B cell (primary cell): ENCODE measurements at regions of chr11 and their contacts with region 1.

Region 1: GRCh38 chr11:34585735-34586487 is 35.0 kb upstream of the EHF start:
- DNase-seq: peak; percentile 74
- ATAC-seq: peak; percentile 94
- H3K4me3 ChIP-seq: no peak overlapping the region
- H3K4me3 Mint-ChIP-seq: peak overlapping the region; percentile 33
- H3K27ac ChIP-seq: peak overlapping the region; percentile 43
- H3K27ac Mint-ChIP-seq: peak overlapping the region; percentile 48
- H3K4me1 ChIP-seq: peaks cover 12 to 16% of the 10 kb centered on the region in 2 donors
- H3K4me1 Mint-ChIP-seq: peaks cover 23% of the 10 kb centered on the region
- H3K27me3 ChIP-seq: no peaks in the 10 kb centered on the region
- H3K27me3 Mint-ChIP-seq: no peaks in the 10 kb centered on the region
- CTCF ChIP-seq: peak; percentile 77

Region 2: GRCh38 chr11:34512840-34513681 is 72.8 kb before region 1 on chr11:
- CTCF ChIA-PET with region 1: interaction called, 18 read pairs
- POLR2A ChIA-PET with region 1: no interaction called
- intact Hi-C with region 1: no loop called
- DNase-seq: peak; percentile 60
- ATAC-seq: peak; percentile 82
- H3K4me3 ChIP-seq: no peak overlapping the region
- H3K4me3 Mint-ChIP-seq: no peak overlapping the region
- H3K27ac ChIP-seq: no peak overlapping the region
- H3K27ac Mint-ChIP-seq: no peak overlapping the region
- H3K4me1 ChIP-seq: no peaks in the 10 kb centered on the region
- H3K4me1 Mint-ChIP-seq: no peaks in the 10 kb centered on the region
- H3K27me3 ChIP-seq: peaks cover 0 to 4% (median 0%) of the 10 kb centered on the region in 4 experiments
- H3K27me3 Mint-ChIP-seq: peaks cover 6% of the 10 kb centered on the region
- CTCF ChIP-seq: peak; percentile 80

Region 3: DNA sequence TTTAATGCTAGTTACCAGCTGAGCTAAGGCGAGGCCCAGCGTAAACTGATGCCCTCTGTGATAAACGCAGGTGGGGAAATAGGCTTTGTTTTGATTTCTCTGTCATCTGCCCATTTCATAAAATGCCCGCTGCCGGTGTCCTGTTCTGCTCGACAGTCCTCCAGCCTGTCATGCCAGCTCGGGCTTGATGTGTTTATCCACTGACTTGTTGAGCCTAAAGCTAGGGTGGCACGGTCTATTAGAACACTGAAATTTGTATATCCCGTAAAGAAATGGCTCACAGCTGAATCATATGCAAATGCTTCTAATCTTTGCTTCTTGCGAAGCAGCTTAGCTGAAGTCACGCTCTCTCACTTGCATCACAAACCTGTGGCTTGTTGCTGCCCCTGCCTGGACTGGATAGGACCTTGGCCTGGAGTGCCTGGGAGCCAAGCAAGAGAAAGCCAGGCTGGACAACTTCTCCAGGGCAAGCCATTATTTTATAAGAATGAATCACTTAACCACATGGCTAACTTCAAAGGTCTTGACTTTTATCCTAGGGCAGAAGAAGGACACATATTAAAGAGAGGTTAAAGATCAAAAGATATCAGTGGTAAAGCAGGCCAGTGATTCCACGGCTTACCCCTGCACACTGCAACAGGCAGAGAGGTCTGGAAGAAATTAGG is 68.0 kb after region 1 on chr11:
- CTCF ChIA-PET with region 1: interaction called, 34 read pairs
- POLR2A ChIA-PET with region 1: no interaction called
- intact Hi-C with region 1: loop called (anchors 5 kb)
- DNase-seq: peak; percentile 22
- ATAC-seq: peak; percentile 60
- H3K4me3 ChIP-seq: no peak overlapping the region
- H3K4me3 Mint-ChIP-seq: peak overlapping the region; percentile 75
- H3K27ac ChIP-seq: no peak overlapping the region
- H3K27ac Mint-ChIP-seq: peak overlapping the region; percentile 83
- H3K4me1 ChIP-seq: peaks cover 39 to 48% of the 10 kb centered on the region in 2 donors
- H3K4me1 Mint-ChIP-seq: peaks cover 41% of the 10 kb centered on the region
- H3K27me3 ChIP-seq: no peaks in the 10 kb centered on the region
- H3K27me3 Mint-ChIP-seq: peaks cover 4% of the 10 kb centered on the region
- CTCF ChIP-seq: no peak

Region 4: GRCh38 chr11:34890812-34891211 is 304.9 kb after region 1 on chr11:
- CTCF ChIA-PET with region 1: interaction called, 45 read pairs
- POLR2A ChIA-PET with region 1: no interaction called
- intact Hi-C with region 1: loop called (anchors 1 kb)
- DNase-seq: peak; percentile 26
- ATAC-seq: no peak
- H3K4me3 ChIP-seq: no peak overlapping the region
- H3K4me3 Mint-ChIP-seq: no peak overlapping the region
- H3K27ac ChIP-seq: no peak overlapping the region
- H3K27ac Mint-ChIP-seq: no peak overlapping the region
- H3K4me1 ChIP-seq: no peaks in the 10 kb centered on the region
- H3K4me1 Mint-ChIP-seq: no peaks in the 10 kb centered on the region
- H3K27me3 ChIP-seq: no peaks in the 10 kb centered on the region
- H3K27me3 Mint-ChIP-seq: no peaks in the 10 kb centered on the region
- CTCF ChIP-seq: peak; percentile 54

Region 5: DNA sequence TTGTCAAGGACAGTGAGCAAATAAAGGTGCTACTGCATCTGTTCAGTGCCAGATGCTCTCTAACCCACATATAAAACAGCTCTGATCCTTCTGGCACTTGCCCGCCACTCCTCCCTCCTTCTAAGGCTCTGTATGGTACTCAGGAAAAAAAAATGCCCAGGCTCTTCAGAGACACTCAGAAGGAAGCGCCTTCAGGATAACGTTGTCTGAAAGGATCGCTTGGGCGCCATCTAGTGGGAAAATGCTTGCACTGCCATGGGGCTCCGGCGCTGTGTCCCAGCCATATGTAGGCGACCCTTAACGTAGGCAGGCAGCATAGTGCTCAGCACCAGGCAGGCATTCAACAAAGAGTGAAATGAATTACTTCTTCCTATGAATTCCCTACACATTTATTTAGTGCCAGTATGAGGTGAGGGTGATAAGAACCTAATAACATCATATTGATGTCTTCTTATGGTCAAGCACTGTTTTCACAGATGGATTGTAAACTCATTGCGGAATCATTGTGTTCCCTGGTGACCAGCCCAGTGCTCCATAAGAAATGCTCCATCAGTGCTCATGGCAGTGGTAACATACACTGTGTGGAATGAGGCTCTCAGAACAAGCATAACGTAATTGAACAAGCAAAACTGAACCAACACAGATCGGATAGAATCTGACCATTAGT is 899.9 kb after region 1 on chr11:
- CTCF ChIA-PET with region 1: interaction called, 11 read pairs
- POLR2A ChIA-PET with region 1: no interaction called
- intact Hi-C with region 1: no loop called
- DNase-seq: peak; percentile 71
- ATAC-seq: peak; percentile 70
- H3K4me3 ChIP-seq: no peak overlapping the region
- H3K4me3 Mint-ChIP-seq: no peak overlapping the region
- H3K27ac ChIP-seq: no peak overlapping the region
- H3K27ac Mint-ChIP-seq: no peak overlapping the region
- H3K4me1 ChIP-seq: no peaks in the 10 kb centered on the region
- H3K4me1 Mint-ChIP-seq: no peaks in the 10 kb centered on the region
- H3K27me3 ChIP-seq: peaks cover 0 to 22% (median 9%) of the 10 kb centered on the region in 4 experiments
- H3K27me3 Mint-ChIP-seq: peaks cover 57% of the 10 kb centered on the region
- CTCF ChIP-seq: peak; percentile 97